ENCODE measurements at regions of chr22 and their contacts with region 1.

Region 1: DNA sequence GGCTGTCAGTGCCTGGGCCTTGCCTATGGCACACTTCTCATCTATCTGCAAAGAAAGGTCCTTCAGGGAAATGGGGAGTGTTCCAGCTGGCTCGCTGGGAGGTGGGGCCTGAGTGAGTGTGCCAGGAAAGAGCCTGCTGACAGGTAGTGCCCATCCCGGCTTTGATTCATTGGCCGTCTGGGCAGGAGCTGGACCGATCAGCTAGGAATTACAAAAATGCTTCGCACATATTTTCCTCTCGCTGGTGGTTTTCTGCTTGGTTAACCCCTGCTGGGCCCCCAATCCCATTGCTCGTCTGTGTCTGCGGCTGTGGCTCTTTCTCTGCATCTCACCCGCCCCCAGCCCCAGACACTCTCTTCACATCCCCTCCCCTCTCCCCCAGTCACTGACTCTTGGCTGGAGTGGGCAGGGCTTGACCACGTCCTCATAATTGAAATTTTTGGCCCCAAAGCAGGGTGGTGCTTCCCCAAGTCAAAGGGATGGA is 10.8 kb downstream of the LIF start:
- DNase-seq: no peak
- ATAC-seq: no peak
- H3K4me3 Mint-ChIP-seq: no peak overlapping the region
- H3K27ac Mint-ChIP-seq: no peak overlapping the region
- H3K4me1 Mint-ChIP-seq: peaks cover 2% of the 10 kb centered on the region
- H3K27me3 Mint-ChIP-seq: no peaks in the 10 kb centered on the region
- CTCF ChIP-seq: no peak

Region 2: GRCh38 chr22:30221121-30221992 is 14.4 kb before region 1 on chr22:
- CTCF ChIA-PET with region 1: interaction called, 3 read pairs
- POLR2A ChIA-PET with region 1: interaction called, 11 read pairs
- intact Hi-C with region 1: no loop called
- DNase-seq: peak; percentile 91
- ATAC-seq: peak; percentile 87
- H3K4me3 Mint-ChIP-seq: peak overlapping the region; percentile 28
- H3K27ac Mint-ChIP-seq: peak overlapping the region; percentile 86
- H3K4me1 Mint-ChIP-seq: peaks cover 60% of the 10 kb centered on the region
- H3K27me3 Mint-ChIP-seq: no peaks in the 10 kb centered on the region
- CTCF ChIP-seq: no peak

Region 3: DNA sequence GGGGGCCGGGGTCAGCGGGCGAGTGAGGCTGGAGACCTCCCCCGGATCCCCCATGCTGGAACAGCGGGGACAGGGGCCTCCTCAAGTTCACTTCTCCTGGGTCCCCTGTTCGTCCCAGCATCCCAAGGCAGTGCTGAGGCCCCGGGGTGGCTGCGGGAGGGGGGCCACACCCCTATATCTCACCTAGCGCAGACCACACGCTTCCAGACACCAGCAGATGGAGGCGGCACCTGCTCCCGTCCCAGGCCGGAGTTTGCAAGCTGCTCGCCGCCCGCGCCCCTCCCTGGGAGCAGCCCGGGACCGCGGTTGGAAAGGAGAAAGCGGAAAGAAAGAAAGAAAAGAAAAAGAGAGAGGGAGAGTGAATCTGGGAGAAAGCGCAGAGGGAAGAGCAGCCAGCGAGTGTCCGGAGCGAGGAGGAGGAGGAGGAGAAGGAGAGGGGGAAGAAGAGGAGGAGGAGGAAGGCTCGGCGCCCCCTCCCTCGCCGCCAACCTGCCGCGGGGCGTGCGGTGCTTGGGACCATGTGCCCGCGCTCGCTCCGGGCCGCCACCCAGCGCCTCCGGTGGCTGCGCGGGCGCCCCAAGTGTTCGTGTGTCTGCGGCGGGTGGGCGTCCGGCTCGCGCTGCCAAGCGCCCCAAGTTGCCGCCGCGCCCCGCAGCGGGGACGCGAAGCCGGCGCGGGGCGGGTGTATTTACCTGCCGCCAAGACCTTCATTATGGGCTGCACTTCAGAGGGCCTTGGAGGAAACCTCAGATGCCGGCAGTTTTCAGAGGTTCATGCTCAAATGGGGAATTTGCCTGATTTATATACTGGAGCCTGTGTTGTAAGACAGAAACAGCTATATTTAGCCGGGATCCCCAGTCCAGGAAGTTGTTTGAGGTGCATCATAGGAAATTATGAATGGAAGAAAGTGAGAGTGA is 10.5 kb after region 1 on chr22 and contains the start of gene LIF:
- CTCF ChIA-PET with region 1: no interaction called
- POLR2A ChIA-PET with region 1: interaction called, 20 read pairs
- intact Hi-C with region 1: no loop called
- DNase-seq: peak; percentile 74
- ATAC-seq: peak; percentile 57
- H3K4me3 Mint-ChIP-seq: peak within 1 kb of the TSS; percentile 97
- H3K27ac Mint-ChIP-seq: peak within 1 kb of the TSS; percentile 94
- H3K4me1 Mint-ChIP-seq: peaks cover 64% of the 10 kb centered on the region
- H3K27me3 Mint-ChIP-seq: peaks cover 1% of the 10 kb centered on the region
- CTCF ChIP-seq: no peak
- total RNA-seq, gene LIF: 160 to 161 TPM